ENCODE measurements at regions of chr4 and their contacts with region 1.

Region 1: DNA sequence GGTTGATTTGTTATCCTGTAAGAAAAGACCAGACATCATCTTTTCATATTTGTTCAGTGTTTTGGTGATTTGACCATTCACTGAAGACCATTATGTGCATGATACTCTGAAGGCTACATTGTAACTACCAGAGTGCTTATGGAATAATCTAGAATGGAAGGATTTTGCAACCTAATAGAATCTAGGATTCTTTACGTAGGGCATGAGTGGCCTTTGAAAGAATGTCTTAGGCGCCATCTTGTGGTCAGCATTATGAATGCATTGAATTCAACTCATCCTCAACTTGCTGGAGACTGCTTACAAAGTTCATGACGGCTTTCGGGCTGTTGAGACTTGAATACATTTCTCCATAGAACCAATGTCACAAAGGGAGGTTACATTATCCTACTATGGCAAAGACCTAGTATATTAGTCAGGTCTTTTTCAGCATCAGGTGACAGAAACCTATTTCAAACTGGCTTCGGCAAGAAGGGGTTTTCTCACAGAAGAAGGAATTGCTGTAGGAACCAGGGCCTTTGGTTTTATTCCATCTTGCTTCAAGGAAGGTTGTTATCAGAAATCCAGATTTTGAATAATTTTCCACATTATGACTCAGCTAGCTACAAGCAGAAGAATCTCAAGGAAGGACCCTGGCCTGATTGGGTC is 104.1 kb downstream of the GPAT3 start:
- DNase-seq: peak in 1 of 2 experiments; percentile 58
- H3K4me3 ChIP-seq: no peak overlapping the region
- H3K27ac ChIP-seq: no peak overlapping the region
- H3K4me1 ChIP-seq: no peaks in the 10 kb centered on the region
- H3K27me3 ChIP-seq: no peaks in the 10 kb centered on the region
- CTCF ChIP-seq: peak in 2 of 3 experiments; percentile 69 to 76; a peak in 3 of 4 replicates
- EP300 ChIP-seq: no peak
- POLR2A ChIP-seq: no peak
- RAD21 ChIP-seq: peak; percentile 90 to 92

Region 2: DNA sequence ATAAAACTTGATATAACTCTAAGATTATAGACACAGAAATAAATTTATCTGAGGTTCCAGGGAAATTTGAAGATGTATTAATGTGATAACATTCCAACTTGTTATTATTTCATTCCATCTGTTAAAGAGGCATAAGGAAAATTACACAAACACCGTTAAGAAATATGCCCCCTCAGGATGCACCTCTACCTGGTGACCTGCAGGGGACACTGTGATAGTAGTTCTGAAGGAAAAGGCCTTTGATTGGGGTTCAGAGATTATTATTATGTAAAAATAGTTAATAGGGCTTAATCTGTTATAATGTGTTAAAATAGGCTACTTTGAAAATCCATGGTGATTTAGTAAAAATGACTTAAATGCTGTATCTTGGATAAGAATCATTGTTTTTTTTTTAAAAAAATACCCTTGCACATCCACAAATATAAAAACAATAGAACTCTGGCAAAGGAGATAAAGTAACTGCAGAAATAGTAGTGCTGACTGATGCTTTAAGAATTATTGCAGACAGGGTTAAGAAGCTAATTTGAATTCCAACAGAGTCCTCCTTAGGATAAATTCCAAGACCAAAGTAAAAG is 149.0 kb before region 1 on chr4:
- CTCF ChIA-PET with region 1: interaction called, 17 read pairs
- POLR2A ChIA-PET with region 1: no interaction called
- DNase-seq: no peak
- H3K4me3 ChIP-seq: no peak overlapping the region
- H3K27ac ChIP-seq: no peak overlapping the region
- H3K4me1 ChIP-seq: no peaks in the 10 kb centered on the region; a peak in 1 of 7 replicates
- H3K27me3 ChIP-seq: no peaks in the 10 kb centered on the region
- CTCF ChIP-seq: peak in 2 of 3 experiments; percentile 50 to 74; a peak in 2 of 4 replicates
- EP300 ChIP-seq: no peak
- POLR2A ChIP-seq: no peak
- RAD21 ChIP-seq: peak; percentile 48 to 52

Region 3: GRCh38 chr4:83657295-83657694 is 17.3 kb after region 1 on chr4:
- CTCF ChIA-PET with region 1: interaction called, 30 read pairs
- POLR2A ChIA-PET with region 1: no interaction called
- DNase-seq: no peak
- H3K4me3 ChIP-seq: no peak overlapping the region
- H3K27ac ChIP-seq: no peak overlapping the region
- H3K4me1 ChIP-seq: peaks cover 0 to 3% (median 1%) of the 10 kb centered on the region in 4 experiments; a peak in 2 of 7 replicates
- H3K27me3 ChIP-seq: no peaks in the 10 kb centered on the region
- CTCF ChIP-seq: no peak
- EP300 ChIP-seq: no peak
- POLR2A ChIP-seq: no peak
- RAD21 ChIP-seq: no peak

Region 4: GRCh38 chr4:83771113-83771705 is 131.2 kb after region 1 on chr4:
- CTCF ChIA-PET with region 1: interaction called, 18 read pairs
- POLR2A ChIA-PET with region 1: no interaction called
- DNase-seq: peak; percentile 36 to 53
- H3K4me3 ChIP-seq: no peak overlapping the region
- H3K27ac ChIP-seq: no peak overlapping the region
- H3K4me1 ChIP-seq: no peaks in the 10 kb centered on the region; a peak in 1 of 7 replicates
- H3K27me3 ChIP-seq: no peaks in the 10 kb centered on the region
- CTCF ChIP-seq: peak; percentile 72 to 77 (median 72)
- EP300 ChIP-seq: no peak
- POLR2A ChIP-seq: no peak
- RAD21 ChIP-seq: peak; percentile 90 to 94